RWPE1 (cell line): ENCODE measurements at regions of chr20 and their contacts with region 1.

Region 1: DNA sequence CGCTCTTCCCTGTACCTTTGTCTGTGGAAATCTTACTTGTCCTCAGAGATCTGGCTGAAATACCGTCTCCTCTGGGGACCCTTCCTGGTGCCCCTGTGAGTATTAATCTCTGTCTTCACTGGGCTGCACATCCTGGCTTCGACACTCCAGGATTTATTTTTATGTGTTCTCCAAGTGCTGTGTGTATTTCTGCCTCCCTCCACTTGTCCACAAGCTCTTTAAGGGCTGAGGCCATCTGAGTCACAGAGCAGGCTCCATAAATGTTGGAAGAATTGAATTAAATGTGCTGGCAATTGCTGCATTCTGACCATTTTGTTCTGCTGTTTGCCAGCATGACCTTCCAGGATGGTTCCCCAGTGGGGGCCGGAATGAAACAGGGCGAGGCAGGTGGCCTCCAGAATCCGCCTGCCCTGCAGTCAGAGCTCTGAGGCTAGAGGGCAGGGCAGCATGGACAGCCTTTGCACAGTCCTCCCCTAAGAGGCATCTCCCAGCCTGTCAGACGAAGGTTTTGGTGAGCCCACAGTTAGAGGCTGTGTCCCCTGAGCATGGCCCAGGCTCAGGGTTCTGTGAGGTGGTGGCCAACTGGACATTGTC is 105.8 kb downstream of the DLGAP4 start:
- DNase-seq: no peak
- H3K27ac ChIP-seq: no peak overlapping the region
- CTCF ChIP-seq: no peak

Region 2: GRCh38 chr20:36214684-36215256 is 197.2 kb before region 1 on chr20:
- CTCF ChIA-PET with region 1: interaction called, 10 read pairs
- POLR2A ChIA-PET with region 1: no interaction called
- DNase-seq: peak; percentile 73
- H3K27ac ChIP-seq: no peak overlapping the region
- CTCF ChIP-seq: peak; percentile 81